ENCODE measurements at regions of chr19 and their contacts with region 1.

Region 1: DNA sequence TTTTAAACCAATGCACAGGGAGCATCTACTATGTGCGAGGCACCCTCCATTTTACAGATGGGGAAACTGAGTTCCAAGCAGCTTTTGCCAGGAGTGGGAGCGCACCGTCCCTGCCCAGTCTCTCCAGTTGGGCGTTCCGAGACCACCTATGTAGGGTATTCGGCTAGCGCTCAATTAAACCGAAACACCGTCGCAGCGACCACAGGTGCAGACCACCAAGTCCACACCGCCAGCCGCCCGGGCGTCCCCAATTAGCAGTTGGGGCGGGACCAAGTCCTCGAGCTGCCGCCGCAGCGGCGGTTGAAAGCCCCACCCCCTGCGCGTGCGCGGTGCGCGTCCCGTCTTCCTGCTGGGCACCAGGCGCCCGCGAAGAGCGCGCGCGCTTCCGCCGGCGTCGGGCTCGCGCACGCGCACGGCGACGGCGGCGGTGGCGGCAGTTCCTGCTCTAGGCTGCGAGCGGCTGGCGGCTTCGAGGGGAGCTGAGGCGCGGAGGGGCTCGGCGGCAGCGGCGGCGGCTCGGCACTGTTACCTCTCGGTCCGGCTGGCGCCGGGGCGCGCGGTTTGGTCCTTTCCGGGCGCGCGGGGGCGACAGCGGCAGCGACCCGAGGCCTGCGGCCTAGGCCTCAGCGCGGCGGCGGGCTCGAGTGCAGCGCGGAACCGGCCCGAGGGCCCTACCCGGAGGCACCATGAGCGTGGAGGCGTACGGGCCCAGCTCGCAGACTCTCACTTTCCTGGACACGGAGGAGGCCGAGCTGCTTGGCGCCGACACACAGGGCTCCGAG is at the start of gene UPF1:
- DNase-seq: peak; percentile 98
- H3K4me3 ChIP-seq: peak within 1 kb of the TSS; percentile 94
- H3K27ac ChIP-seq: peak within 1 kb of the TSS; percentile 72
- H3K4me1 ChIP-seq: peaks cover 26% of the 10 kb centered on the region
- CTCF ChIP-seq: no peak
- total RNA-seq, gene UPF1: 65.2 and 77.2 TPM in 2 replicates

Region 2: DNA sequence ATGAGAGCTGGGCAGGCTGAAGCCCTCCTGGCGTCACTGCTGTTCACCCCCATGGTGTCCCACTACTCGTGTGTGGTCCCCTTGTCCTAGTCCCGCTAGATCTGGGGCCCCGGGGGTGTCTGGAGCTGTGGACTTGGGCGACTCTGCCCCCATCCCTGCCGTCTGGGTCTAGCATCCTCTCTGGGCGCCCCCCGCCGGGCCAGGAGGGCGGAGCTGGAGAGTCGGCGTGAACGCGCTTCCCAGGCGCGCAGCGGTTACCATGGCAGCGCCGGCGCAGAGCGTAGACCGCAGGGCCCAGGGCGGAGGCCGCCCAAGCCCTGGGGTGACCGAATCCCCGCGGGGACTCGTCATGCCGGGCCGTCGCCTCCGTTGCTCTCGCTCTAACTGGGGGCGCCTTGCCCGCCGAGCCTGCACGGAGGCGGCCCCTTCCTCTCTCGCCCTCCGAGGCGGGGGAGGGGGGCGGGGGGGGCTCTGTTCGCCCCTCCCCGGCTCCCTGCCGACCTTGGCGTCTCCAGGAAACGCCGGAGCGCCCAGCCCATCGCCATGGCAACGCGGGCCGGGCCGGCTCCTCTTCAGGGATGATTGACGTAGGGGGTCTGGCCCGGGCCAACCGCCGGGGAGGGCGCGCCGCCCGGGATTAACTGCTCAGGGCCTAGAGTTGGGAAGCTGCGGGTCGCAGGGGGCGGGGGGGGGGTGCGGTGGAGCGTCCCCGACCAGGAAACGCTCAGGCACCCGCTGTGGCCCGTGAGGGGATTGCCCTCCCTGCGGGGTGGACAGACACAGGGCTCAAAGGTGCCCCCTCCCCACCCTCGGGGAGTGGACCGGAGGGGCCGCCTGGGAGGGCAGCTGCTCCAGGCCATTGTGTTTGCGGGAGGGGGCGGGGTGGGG is 402.7 kb before region 1 on chr19:
- CTCF ChIA-PET with region 1: no interaction called
- POLR2A ChIA-PET with region 1: no interaction called
- intact Hi-C with region 1: loop called (anchors 10 kb)
- DNase-seq: peak; percentile 83
- H3K4me3 ChIP-seq: peak overlapping the region; percentile 41
- H3K27ac ChIP-seq: peak overlapping the region; percentile 37
- H3K4me1 ChIP-seq: peaks cover 53% of the 10 kb centered on the region
- CTCF ChIP-seq: 0 out of 2 replicates have a peak, but pooled peaks have one; percentile 29

Region 3: DNA sequence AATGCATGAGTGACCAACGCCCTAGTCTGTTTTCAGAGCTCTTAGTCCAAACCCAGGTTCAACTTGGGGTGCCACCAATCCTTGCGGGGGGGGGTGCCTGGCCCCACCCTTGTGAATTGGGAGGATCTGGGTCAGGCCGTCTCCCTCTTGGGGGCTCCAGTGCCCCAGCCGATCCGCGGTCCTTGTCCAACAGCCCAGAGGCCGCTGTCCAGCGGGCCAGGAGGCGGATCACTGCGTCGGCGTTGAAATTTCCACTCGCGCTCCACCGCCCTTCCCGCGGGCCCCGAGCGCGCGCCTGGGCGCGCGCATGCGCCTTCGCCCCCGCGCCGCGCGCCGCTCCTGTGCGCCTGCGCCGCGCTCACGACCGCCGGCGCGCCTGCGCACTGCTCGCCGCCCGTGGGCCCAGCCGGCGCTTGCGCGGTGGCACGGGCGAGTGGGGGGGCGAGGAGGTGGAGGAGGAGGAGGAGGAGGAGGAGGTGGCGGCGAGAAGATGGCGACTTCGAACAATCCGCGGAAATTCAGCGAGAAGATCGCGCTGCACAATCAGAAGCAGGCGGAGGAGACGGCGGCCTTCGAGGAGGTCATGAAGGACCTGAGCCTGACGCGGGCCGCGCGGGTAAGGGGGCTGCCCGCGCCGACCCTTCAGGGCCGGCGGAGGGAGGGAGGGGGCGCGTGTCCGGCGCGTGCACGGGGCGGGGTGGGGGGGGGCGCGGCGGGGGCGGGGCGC is 148.3 kb before region 1 on chr19 and contains the start of gene CRTC1:
- CTCF ChIA-PET with region 1: no interaction called
- POLR2A ChIA-PET with region 1: no interaction called
- intact Hi-C with region 1: loop called (anchors 5 kb)
- DNase-seq: peak; percentile 92
- H3K4me3 ChIP-seq: peak within 1 kb of the TSS; percentile 73
- H3K27ac ChIP-seq: peak within 1 kb of the TSS; percentile 35
- H3K4me1 ChIP-seq: peaks cover 23% of the 10 kb centered on the region
- CTCF ChIP-seq: no peak
- total RNA-seq, gene CRTC1: 3.4 and 4.1 TPM in 2 replicates

Region 4: GRCh38 chr19:18879579-18880373 is 48.1 kb after region 1 on chr19:
- CTCF ChIA-PET with region 1: no interaction called
- POLR2A ChIA-PET with region 1: no interaction called
- intact Hi-C with region 1: no loop called
- DNase-seq: peak; percentile 83
- H3K4me3 ChIP-seq: no peak overlapping the region
- H3K27ac ChIP-seq: no peak overlapping the region
- H3K4me1 ChIP-seq: no peaks in the 10 kb centered on the region
- CTCF ChIP-seq: no peak